Caco-2 (cell line): ENCODE measurements at regions of chr1 and their contacts with region 1.

Region 1: GRCh38 chr1:173507205-173507846 is 30.2 kb downstream of the PRDX6 start:
- DNase-seq: peak in 1 of 2 experiments; percentile 41
- H3K4me3 ChIP-seq: no peak overlapping the region
- H3K4me3 Mint-ChIP-seq: no peak overlapping the region
- H3K27ac Mint-ChIP-seq: peak overlapping the region; percentile 83
- H3K4me1 ChIP-seq: peaks cover 22% of the 10 kb centered on the region; the same call in 1 of the 2 replicates
- H3K4me1 Mint-ChIP-seq: peaks cover 16% of the 10 kb centered on the region
- H3K27me3 ChIP-seq: no peaks in the 10 kb centered on the region; the same call in 1 of the 2 replicates
- H3K27me3 Mint-ChIP-seq: no peaks in the 10 kb centered on the region
- CTCF ChIP-seq: no peak

Region 2: GRCh38 chr1:173392895-173393658 is 114.2 kb before region 1 on chr1:
- CTCF ChIA-PET with region 1: no interaction called
- POLR2A ChIA-PET with region 1: no interaction called
- intact Hi-C with region 1: no loop called
- DNase-seq: no peak
- H3K4me3 ChIP-seq: no peak overlapping the region
- H3K4me3 Mint-ChIP-seq: no peak overlapping the region
- H3K27ac Mint-ChIP-seq: no peak overlapping the region
- H3K4me1 ChIP-seq: no peaks in the 10 kb centered on the region
- H3K4me1 Mint-ChIP-seq: peaks cover 6% of the 10 kb centered on the region
- H3K27me3 ChIP-seq: no peaks in the 10 kb centered on the region
- H3K27me3 Mint-ChIP-seq: no peaks in the 10 kb centered on the region
- CTCF ChIP-seq: no peak

Region 3: DNA sequence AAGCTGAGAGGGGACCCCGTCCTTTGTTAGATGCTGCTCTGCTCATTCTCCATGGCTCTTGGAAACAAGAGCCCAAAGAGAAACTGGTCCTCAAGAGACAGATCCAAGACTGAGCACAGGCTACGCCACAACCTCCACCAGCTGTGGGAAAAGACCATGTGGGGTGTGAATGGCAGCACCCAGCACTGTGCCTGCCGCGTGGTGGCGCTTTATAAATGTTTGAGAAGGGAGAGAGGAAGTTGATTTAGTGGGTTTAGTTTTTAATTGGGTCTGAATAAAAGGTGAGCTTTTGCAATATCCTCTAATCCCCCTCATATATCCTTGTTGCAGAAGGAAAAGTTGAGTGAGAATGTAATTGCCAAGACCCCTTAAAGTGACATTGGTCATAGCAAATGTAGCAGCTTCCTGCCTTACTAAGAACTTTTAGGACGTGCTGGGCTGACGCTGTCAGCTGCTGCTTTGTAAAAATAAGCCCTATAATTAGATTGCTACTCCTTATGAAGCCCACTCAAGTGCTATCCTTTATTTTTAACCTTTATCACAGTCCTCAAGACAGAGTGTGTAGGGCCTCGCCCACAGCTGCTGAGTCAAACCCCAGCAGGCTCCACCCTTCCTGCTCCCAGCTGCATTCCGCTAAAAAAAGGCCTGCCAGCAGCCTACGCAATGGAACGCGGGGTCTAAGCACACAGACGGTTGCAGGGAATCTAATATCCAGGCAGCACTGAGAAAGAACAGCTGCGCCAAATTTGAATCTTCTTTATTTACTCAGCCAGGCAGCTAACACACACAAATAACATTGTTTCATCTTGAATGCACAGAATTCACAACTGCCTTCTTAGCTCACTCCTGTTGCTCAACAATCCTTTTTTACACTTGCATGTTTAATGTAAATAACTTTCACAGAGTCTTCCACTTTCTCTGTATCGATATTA is 77.6 kb before region 1 on chr1:
- CTCF ChIA-PET with region 1: no interaction called
- POLR2A ChIA-PET with region 1: no interaction called
- intact Hi-C with region 1: no loop called
- DNase-seq: peak; percentile 28 to 52
- H3K4me3 ChIP-seq: no peak overlapping the region
- H3K4me3 Mint-ChIP-seq: no peak overlapping the region
- H3K27ac Mint-ChIP-seq: peak overlapping the region; percentile 23
- H3K4me1 ChIP-seq: peaks cover 42% of the 10 kb centered on the region
- H3K4me1 Mint-ChIP-seq: peaks cover 24% of the 10 kb centered on the region
- H3K27me3 ChIP-seq: no peaks in the 10 kb centered on the region
- H3K27me3 Mint-ChIP-seq: no peaks in the 10 kb centered on the region
- CTCF ChIP-seq: no peak

Region 4: GRCh38 chr1:173451981-173452380 is 55.3 kb before region 1 on chr1:
- CTCF ChIA-PET with region 1: no interaction called
- POLR2A ChIA-PET with region 1: no interaction called
- intact Hi-C with region 1: no loop called
- DNase-seq: no peak
- H3K4me3 ChIP-seq: no peak overlapping the region
- H3K4me3 Mint-ChIP-seq: no peak overlapping the region
- H3K27ac Mint-ChIP-seq: no peak overlapping the region
- H3K4me1 ChIP-seq: no peaks in the 10 kb centered on the region
- H3K4me1 Mint-ChIP-seq: peaks cover 7% of the 10 kb centered on the region
- H3K27me3 ChIP-seq: no peaks in the 10 kb centered on the region
- H3K27me3 Mint-ChIP-seq: no peaks in the 10 kb centered on the region
- CTCF ChIP-seq: no peak

Region 5: GRCh38 chr1:173489149-173489934 is 18.0 kb before region 1 on chr1:
- CTCF ChIA-PET with region 1: no interaction called
- POLR2A ChIA-PET with region 1: interaction called, 3 read pairs
- intact Hi-C with region 1: loop called (anchors 1 kb)
- DNase-seq: peak; percentile 80
- H3K4me3 ChIP-seq: no peak overlapping the region
- H3K4me3 Mint-ChIP-seq: no peak overlapping the region
- H3K27ac Mint-ChIP-seq: peak overlapping the region; percentile 65
- H3K4me1 ChIP-seq: peaks cover 20% of the 10 kb centered on the region
- H3K4me1 Mint-ChIP-seq: peaks cover 14% of the 10 kb centered on the region
- H3K27me3 ChIP-seq: no peaks in the 10 kb centered on the region
- H3K27me3 Mint-ChIP-seq: no peaks in the 10 kb centered on the region
- CTCF ChIP-seq: no peak

Region 6: DNA sequence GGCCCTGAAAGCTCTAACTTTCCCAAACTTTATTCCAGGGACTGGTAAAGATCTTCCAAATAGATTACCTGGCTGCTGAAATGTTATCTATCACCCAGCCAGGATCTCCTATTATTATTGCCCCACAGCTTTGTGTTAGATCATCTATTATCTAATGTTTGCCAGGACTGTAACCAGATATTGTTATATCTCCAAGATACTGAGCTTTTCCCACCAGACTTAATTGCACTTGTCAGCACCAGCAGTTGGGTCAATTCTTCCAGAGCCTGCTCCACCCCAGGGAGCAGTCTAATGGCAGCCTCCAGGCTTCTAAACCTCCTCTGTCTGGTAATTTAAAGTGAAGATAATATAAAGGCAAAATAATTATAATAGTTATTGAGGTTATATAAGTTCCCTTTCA is 28.9 kb after region 1 on chr1:
- CTCF ChIA-PET with region 1: no interaction called
- POLR2A ChIA-PET with region 1: no interaction called
- intact Hi-C with region 1: no loop called
- DNase-seq: no peak
- H3K4me3 ChIP-seq: no peak overlapping the region
- H3K4me3 Mint-ChIP-seq: no peak overlapping the region
- H3K27ac Mint-ChIP-seq: no peak overlapping the region
- H3K4me1 ChIP-seq: no peaks in the 10 kb centered on the region
- H3K4me1 Mint-ChIP-seq: no peaks in the 10 kb centered on the region
- H3K27me3 ChIP-seq: no peaks in the 10 kb centered on the region
- H3K27me3 Mint-ChIP-seq: peaks cover 16% of the 10 kb centered on the region
- CTCF ChIP-seq: no peak